SK-N-SH (cell line): ENCODE measurements at regions of chr7 and their contacts with region 1.

Region 1: DNA sequence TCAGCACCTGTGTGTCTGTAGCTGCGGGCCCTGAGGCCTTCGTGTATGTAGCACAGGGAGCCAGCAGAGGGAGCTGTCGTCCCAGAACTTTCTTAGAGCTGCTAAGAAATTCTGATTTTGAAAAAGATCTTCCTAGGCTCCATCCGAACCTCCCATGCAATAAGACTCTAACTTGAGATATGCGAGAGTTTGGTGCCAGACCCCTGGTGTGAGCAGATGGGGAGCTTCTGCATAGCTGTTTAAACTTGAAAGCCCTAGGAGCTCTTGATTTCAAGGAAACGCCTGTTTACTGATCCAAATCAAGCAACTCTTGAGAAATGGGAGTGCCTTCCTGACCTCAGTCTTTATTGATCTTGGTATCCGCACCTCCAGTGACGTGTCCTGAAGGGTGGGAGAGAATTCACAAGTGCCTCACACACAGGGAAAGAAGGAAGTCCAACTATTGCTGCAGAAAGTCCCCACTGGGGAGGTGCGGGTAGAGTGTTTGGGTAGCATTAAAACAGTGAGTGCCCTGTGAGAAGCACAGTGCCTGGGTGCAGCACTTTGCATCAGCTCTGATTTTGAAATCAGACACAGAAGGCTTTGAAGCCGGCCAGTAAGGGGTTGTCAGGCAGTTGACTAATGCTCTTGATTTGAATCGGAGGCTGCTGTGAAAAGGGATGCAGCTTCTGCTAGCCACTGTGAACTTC is 66.4 kb upstream of the STRIP2 start:
- DNase-seq: peak; percentile 80
- H3K4me3 ChIP-seq: no peak overlapping the region; a peak in 1 of 4 replicates
- H3K27ac ChIP-seq: no peak overlapping the region
- H3K4me1 ChIP-seq: peaks cover 0 to 3% of the 10 kb centered on the region in 2 experiments; a peak in 1 of 4 replicates
- H3K27me3 ChIP-seq: no peaks in the 10 kb centered on the region
- CTCF ChIP-seq: peak; percentile 99
- EP300 ChIP-seq: no peak
- RAD21 ChIP-seq: peak; percentile 96

Region 2: DNA sequence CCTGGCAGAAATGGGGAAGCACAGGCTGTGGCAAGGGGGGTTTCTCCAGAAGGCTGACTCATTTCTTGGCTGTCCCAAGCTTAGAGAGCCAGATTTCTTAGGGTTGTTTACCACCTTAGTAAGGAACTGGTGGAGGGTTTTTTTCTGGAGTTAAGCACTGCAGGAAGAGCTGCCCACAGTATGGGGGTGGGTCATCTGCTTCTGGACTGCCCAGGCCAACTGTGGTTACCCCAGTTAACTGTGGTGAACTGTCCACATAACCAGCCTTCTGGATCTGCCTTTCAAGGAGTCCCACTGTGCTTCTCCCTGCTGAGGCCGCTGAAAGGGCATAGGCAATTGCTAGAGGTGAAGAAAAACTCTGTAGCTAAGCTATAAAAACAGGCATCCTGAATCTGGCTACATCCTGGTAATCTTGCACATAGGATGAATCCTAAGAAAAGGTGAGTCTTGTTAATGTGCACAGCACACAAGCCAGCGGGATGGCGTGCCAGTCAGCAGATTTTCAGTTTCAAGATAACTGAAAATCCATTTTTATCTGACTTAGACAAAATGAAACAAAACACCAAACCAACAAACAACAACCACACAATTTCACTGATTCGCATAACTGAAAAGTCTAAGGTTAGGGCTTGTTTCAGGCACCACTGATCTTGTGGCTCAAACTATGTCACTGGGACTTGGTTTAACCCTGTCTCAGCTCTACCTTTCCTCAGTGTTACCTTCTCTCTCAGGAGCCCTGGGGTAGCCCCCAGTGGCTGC is 244.9 kb before region 1 on chr7:
- CTCF ChIA-PET with region 1: no interaction called
- POLR2A ChIA-PET with region 1: no interaction called
- DNase-seq: no peak
- H3K4me3 ChIP-seq: no peak overlapping the region
- H3K27ac ChIP-seq: no peak overlapping the region
- H3K4me1 ChIP-seq: no peaks in the 10 kb centered on the region
- H3K27me3 ChIP-seq: peaks cover 11% of the 10 kb centered on the region; the same call in 1 of the 2 replicates
- CTCF ChIP-seq: no peak
- EP300 ChIP-seq: no peak
- RAD21 ChIP-seq: no peak

Region 3: DNA sequence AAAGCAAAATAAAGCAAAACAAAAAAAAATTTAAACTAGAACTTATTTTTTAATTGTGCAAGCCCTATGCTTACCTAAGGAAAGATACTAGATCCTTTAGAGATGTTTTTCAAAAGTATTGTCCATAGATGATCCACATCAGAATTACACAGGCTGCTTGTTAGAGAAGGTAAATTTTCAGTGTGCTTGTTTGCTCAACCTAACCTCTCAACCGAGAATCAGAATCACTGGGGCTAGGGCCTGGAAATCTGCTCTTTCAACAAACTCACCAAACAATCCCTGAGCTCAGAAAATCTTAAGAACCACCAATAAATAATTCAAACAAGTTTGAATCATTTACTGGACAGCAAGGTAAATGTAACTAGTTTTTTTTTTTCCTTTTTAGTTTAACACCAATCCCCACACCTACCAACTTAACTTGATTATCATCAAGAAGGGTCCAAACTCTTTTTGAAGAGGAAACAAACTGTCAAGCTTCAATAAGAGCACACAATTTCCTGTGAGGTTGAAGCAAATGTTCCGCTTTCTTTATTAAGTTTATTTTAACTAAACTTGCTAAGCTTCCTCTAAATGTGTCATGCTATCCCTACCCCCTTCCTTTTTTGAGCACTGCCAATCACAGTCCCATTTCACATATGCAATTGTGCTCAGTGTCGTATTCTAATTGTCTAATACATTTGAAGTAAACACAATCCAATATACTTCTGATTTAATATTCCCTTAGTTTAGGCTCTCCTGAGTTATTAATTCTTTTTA is 230.8 kb before region 1 on chr7:
- CTCF ChIA-PET with region 1: no interaction called
- POLR2A ChIA-PET with region 1: no interaction called
- DNase-seq: no peak
- H3K4me3 ChIP-seq: no peak overlapping the region
- H3K27ac ChIP-seq: no peak overlapping the region
- H3K4me1 ChIP-seq: no peaks in the 10 kb centered on the region
- H3K27me3 ChIP-seq: peaks cover 18% of the 10 kb centered on the region
- CTCF ChIP-seq: no peak
- EP300 ChIP-seq: no peak
- RAD21 ChIP-seq: no peak

Region 4: GRCh38 chr7:129343099-129343700 is 24.6 kb before region 1 on chr7:
- CTCF ChIA-PET with region 1: interaction called, 83 read pairs
- POLR2A ChIA-PET with region 1: no interaction called
- DNase-seq: peak; percentile 64
- H3K4me3 ChIP-seq: no peak overlapping the region
- H3K27ac ChIP-seq: no peak overlapping the region
- H3K4me1 ChIP-seq: peaks cover 0 to 6% of the 10 kb centered on the region in 2 experiments; a peak in 1 of 4 replicates
- H3K27me3 ChIP-seq: no peaks in the 10 kb centered on the region
- CTCF ChIP-seq: peak; percentile 98
- EP300 ChIP-seq: no peak
- RAD21 ChIP-seq: peak; percentile 81

Region 5: DNA sequence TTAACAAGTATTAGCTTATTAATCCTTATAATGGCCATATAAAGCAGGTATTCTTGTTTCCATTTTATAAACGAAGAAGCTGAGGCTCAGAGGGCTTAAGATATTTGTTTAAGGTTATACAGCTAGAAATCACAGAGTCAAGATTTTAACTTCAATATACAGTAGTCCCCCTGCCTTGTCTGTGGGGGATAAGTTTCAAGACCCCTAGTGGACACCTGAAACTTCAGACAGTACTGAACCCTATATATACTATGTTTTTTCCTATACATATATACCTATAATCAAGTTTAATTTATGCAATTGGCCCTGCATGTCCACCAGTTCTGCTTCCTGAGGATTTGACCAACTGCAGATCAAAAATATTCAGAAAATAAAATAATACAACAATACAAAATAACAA is 22.0 kb after region 1 on chr7:
- CTCF ChIA-PET with region 1: interaction called, 67 read pairs
- POLR2A ChIA-PET with region 1: no interaction called
- DNase-seq: no peak
- H3K4me3 ChIP-seq: no peak overlapping the region
- H3K27ac ChIP-seq: no peak overlapping the region
- H3K4me1 ChIP-seq: no peaks in the 10 kb centered on the region; a peak in 1 of 4 replicates
- H3K27me3 ChIP-seq: no peaks in the 10 kb centered on the region
- CTCF ChIP-seq: no peak; the same call in none of the 2 replicates
- EP300 ChIP-seq: no peak
- RAD21 ChIP-seq: no peak

Region 6: GRCh38 chr7:129401967-129402860 is 34.4 kb after region 1 on chr7:
- CTCF ChIA-PET with region 1: interaction called, 21 read pairs
- POLR2A ChIA-PET with region 1: no interaction called
- DNase-seq: no peak
- H3K4me3 ChIP-seq: no peak overlapping the region
- H3K27ac ChIP-seq: no peak overlapping the region
- H3K4me1 ChIP-seq: no peaks in the 10 kb centered on the region; a peak in 1 of 4 replicates
- H3K27me3 ChIP-seq: no peaks in the 10 kb centered on the region
- CTCF ChIP-seq: peak; percentile 15; the same call in 1 of the 2 replicates
- EP300 ChIP-seq: no peak
- RAD21 ChIP-seq: peak; percentile 36

Region 7: GRCh38 chr7:129433847-129434674 is 66.2 kb after region 1 on chr7 and contains the start of gene STRIP2:
- CTCF ChIA-PET with region 1: interaction called, 38 read pairs
- POLR2A ChIA-PET with region 1: no interaction called
- DNase-seq: peak; percentile 97
- H3K4me3 ChIP-seq: peak within 1 kb of the TSS; percentile 85 to 93
- H3K27ac ChIP-seq: peak within 1 kb of the TSS; percentile 39 to 81; a peak in 3 of 4 replicates
- H3K4me1 ChIP-seq: peaks cover 7 to 15% of the 10 kb centered on the region in 2 experiments; a peak in 3 of 4 replicates
- H3K27me3 ChIP-seq: no peaks in the 10 kb centered on the region
- CTCF ChIP-seq: peak; percentile 44
- EP300 ChIP-seq: no peak; a peak in 1 of 4 replicates
- RAD21 ChIP-seq: peak; percentile 11; the same call in 1 of the 2 replicates
- polyA plus RNA-seq, gene STRIP2: 4.9 and 6.9 TPM in 2 replicates

Region 8: GRCh38 chr7:129468087-129468486 is 100.2 kb after region 1 on chr7:
- CTCF ChIA-PET with region 1: interaction called, 397 read pairs
- POLR2A ChIA-PET with region 1: no interaction called
- DNase-seq: no peak
- H3K4me3 ChIP-seq: no peak overlapping the region
- H3K27ac ChIP-seq: no peak overlapping the region
- H3K4me1 ChIP-seq: peaks cover 0 to 23% of the 10 kb centered on the region in 2 experiments; a peak in 2 of 4 replicates
- H3K27me3 ChIP-seq: no peaks in the 10 kb centered on the region
- CTCF ChIP-seq: no peak
- EP300 ChIP-seq: no peak
- RAD21 ChIP-seq: no peak

Region 9: DNA sequence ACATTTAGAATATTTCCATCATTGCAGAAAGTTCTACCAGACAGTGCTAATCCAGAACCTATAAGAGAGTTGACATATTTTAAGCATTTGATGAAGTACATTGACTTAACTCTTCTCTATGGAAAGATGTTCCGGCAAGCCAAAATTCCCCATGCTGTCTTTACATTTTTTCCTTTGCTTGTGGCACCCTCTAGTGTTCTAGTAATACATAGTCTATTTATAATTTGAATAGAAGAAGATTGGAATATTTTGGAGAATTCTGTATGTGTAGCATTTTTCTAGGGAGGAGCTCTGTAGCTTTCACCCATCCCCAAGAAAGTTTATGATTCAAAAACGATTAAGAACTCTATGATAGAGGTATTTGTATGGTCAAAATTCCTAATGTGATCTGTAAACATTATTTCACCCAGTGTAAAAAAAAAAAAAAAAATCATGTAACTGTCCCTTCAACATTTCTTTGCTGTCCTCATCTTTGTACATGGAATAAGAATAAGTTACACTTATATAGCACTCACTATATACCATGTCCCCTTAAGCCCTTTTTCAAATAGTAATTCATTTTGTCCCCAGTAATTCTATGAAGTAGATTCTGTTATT is 276.9 kb after region 1 on chr7:
- CTCF ChIA-PET with region 1: interaction called, 38 read pairs
- POLR2A ChIA-PET with region 1: no interaction called
- DNase-seq: peak; percentile 53
- H3K4me3 ChIP-seq: no peak overlapping the region
- H3K27ac ChIP-seq: no peak overlapping the region
- H3K4me1 ChIP-seq: peaks cover 2 to 9% of the 10 kb centered on the region in 2 experiments; a peak in 2 of 4 replicates
- H3K27me3 ChIP-seq: no peaks in the 10 kb centered on the region
- CTCF ChIP-seq: peak; percentile 84
- EP300 ChIP-seq: no peak
- RAD21 ChIP-seq: peak; percentile 89

Region 10: DNA sequence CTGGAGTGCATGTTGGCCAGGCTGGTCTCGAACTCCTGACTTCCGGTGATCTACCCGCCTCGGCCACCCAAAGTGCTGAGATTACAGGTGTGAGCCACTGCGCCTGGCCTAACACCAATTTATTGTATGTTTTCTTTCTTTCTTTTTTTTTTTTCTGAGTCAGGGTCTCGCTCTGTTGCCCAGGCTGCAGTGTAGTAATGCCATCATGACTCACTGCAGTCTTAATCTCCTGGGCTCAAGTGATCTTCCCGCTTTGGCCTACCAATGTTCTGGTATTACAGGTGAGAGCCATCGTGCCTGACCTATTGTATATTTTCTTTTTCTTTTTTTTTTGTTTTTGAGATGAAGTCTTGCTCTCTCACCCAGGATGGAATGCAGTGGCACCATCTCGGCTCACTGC is 618.8 kb after region 1 on chr7:
- CTCF ChIA-PET with region 1: no interaction called
- POLR2A ChIA-PET with region 1: no interaction called
- DNase-seq: no peak
- H3K4me3 ChIP-seq: no peak overlapping the region
- H3K27ac ChIP-seq: no peak overlapping the region
- H3K4me1 ChIP-seq: peaks cover 0 to 6% of the 10 kb centered on the region in 2 experiments; a peak in 2 of 4 replicates
- H3K27me3 ChIP-seq: no peaks in the 10 kb centered on the region
- CTCF ChIP-seq: no peak
- EP300 ChIP-seq: no peak
- RAD21 ChIP-seq: no peak